ENCODE measurements at regions of chr2 and their contacts with region 1.

Region 1: DNA sequence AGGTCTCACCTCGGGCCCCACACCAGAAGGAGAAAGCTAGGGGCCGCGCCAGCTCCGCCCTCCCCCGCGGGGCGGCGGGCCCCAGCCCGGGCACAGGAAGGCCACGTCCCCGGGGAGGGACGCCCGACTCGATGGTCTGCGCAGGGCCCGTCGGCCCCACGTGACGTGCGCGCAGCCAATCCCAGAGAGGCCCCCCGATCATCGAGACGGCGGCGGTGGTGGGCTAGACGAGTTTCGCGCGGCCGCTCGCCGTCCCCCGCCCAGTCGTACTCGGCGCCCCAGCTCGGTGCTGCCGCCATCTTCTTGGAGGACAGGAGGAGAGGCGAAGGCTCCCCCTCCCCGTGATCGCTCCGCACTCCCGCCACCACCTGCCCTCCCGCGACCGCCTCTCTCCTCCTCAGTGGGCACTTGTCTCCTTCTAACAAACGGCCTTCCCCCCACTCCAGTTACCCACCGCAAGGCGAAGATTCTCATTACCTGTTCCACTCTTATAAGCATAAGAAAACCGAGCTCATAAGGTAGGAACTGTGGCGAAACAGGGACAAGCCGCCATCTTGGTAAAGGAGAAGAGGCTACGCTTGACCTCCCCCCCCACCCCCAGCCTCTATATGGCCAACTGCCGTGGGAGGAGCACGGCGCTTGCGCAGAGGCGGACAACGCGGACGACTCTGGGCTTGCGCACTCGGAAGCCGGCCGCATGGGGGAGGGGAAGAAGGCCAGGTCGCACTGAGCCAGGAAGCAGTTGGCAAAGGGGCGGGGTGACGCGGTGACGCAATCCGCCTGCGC is at the start of gene HDLBP:
- DNase-seq: peak; percentile 100
- H3K4me3 Mint-ChIP-seq: peak within 1 kb of the TSS; percentile 100
- H3K27ac Mint-ChIP-seq: peak within 1 kb of the TSS; percentile 100
- H3K4me1 Mint-ChIP-seq: peaks cover 53% of the 10 kb centered on the region
- H3K27me3 Mint-ChIP-seq: no peaks in the 10 kb centered on the region
- total RNA-seq, gene HDLBP: 266 and 270 TPM in 2 replicates

Region 2: DNA sequence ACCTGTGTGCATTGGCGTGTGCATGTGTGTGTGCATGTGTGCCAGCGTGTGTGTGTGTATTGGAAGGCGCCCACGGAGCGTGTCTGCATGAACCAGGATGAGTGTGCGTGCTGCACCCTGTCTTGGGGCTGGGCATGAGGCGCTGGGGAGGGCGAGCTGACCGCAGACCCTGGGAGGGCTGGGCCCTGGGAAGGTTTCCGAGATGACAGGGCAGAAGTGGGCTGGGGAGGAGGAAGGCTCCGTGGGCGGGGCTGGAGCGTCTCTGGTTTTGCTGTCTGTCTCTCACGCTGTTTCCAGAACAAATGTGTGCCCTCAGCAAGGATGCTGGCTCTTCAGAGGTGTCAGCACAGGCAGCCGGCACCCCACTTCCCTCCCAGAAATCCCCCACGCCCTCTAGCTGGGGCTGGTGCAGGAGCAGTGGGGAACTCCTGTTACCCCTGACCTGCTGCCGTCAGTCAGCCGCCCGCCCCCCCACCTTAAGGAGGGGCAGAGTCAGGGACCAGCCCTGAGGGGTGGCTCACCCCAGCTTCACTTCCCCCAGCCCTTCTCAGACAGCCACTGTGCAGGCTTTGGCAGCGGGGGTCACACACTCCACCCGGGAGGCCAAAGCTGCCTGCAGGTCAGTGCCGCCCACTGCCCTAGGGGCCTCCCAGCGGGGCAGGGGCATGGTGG is 690.2 kb before region 1 on chr2 and contains the start of gene GPR35:
- intact Hi-C with region 1: loop called (anchors 10 kb)
- DNase-seq: peak; percentile 91
- H3K4me3 Mint-ChIP-seq: peak within 1 kb of the TSS; percentile 82
- H3K27ac Mint-ChIP-seq: peak within 1 kb of the TSS; percentile 89
- H3K4me1 Mint-ChIP-seq: peaks cover 51% of the 10 kb centered on the region
- H3K27me3 Mint-ChIP-seq: no peaks in the 10 kb centered on the region
- total RNA-seq, gene GPR35: 7.1 and 8.7 TPM in 2 replicates

Region 3: GRCh38 chr2:241271641-241272297 is 43.5 kb before region 1 on chr2:
- intact Hi-C with region 1: loop called (anchors 1 kb)
- DNase-seq: peak; percentile 90
- H3K4me3 Mint-ChIP-seq: peak overlapping the region; percentile 92
- H3K27ac Mint-ChIP-seq: peak overlapping the region; percentile 90
- H3K4me1 Mint-ChIP-seq: peaks cover 42% of the 10 kb centered on the region
- H3K27me3 Mint-ChIP-seq: no peaks in the 10 kb centered on the region

Region 4: GRCh38 chr2:241355983-241356870 is 40.9 kb after region 1 on chr2 and contains the start of gene FARP2:
- intact Hi-C with region 1: loop called (anchors 1 kb)
- DNase-seq: peak; percentile 98
- H3K4me3 Mint-ChIP-seq: peak within 1 kb of the TSS; percentile 79
- H3K27ac Mint-ChIP-seq: peak within 1 kb of the TSS; percentile 76
- H3K4me1 Mint-ChIP-seq: peaks cover 33% of the 10 kb centered on the region
- H3K27me3 Mint-ChIP-seq: no peaks in the 10 kb centered on the region
- total RNA-seq, gene FARP2: 36.5 and 43.1 TPM in 2 replicates

Region 5: GRCh38 chr2:241617431-241618154 is 302.3 kb after region 1 on chr2:
- intact Hi-C with region 1: loop called (anchors 5 kb)
- DNase-seq: peak; percentile 85
- H3K4me3 Mint-ChIP-seq: peak overlapping the region; percentile 86
- H3K27ac Mint-ChIP-seq: peak overlapping the region; percentile 97
- H3K4me1 Mint-ChIP-seq: peaks cover 36% of the 10 kb centered on the region
- H3K27me3 Mint-ChIP-seq: no peaks in the 10 kb centered on the region

Region 6: DNA sequence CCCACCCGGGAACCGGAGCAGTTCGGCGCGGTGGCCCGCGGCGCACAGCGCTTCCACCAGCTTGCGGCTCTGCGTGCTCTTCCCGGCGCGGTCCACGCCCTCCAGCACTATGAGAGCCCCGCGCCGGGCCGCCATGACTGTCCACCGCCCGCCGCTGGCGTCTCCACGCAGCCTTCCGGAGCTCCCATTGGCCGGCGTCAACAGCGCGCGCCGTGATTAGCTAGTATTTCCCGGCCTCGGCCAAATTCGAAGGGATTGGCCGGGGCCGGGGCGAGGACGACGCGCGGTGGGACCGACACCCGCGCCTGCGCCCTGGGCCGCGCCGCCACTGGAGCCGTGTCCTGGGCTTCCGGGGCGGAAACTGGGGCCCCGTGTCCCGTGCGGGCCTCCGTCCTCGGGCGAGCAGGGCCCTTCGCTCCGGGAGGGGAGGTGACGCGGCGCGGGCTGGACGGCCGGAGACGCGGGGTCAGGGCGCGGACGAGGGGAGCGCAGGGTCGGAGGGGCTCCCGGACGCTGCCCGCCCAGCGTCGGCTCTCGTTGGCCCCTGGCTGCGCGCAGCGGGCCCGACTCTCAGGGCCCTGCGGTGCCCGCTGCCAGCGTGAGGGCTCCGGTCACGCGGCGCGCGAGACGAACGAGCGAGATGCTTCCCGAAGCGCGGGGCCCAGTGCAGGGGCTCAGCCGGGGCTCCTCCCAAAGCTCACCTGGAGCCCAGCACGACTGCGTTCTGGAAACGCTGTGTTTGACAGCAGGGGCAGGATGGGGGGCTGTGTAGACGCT is 371.6 kb after region 1 on chr2 and contains the start of gene DTYMK:
- intact Hi-C with region 1: loop called (anchors 1 kb)
- DNase-seq: peak; percentile 99
- H3K4me3 Mint-ChIP-seq: peak within 1 kb of the TSS; percentile 90
- H3K27ac Mint-ChIP-seq: peak within 1 kb of the TSS; percentile 98
- H3K4me1 Mint-ChIP-seq: peaks cover 21% of the 10 kb centered on the region
- H3K27me3 Mint-ChIP-seq: no peaks in the 10 kb centered on the region
- total RNA-seq, gene DTYMK: 110 and 111 TPM in 2 replicates

Region 7: GRCh38 chr2:241724259-241724974 is 409.1 kb after region 1 on chr2:
- intact Hi-C with region 1: no loop called
- DNase-seq: peak; percentile 59
- H3K4me3 Mint-ChIP-seq: no peak overlapping the region
- H3K27ac Mint-ChIP-seq: no peak overlapping the region
- H3K4me1 Mint-ChIP-seq: peaks cover 2% of the 10 kb centered on the region
- H3K27me3 Mint-ChIP-seq: no peaks in the 10 kb centered on the region

Region 8: DNA sequence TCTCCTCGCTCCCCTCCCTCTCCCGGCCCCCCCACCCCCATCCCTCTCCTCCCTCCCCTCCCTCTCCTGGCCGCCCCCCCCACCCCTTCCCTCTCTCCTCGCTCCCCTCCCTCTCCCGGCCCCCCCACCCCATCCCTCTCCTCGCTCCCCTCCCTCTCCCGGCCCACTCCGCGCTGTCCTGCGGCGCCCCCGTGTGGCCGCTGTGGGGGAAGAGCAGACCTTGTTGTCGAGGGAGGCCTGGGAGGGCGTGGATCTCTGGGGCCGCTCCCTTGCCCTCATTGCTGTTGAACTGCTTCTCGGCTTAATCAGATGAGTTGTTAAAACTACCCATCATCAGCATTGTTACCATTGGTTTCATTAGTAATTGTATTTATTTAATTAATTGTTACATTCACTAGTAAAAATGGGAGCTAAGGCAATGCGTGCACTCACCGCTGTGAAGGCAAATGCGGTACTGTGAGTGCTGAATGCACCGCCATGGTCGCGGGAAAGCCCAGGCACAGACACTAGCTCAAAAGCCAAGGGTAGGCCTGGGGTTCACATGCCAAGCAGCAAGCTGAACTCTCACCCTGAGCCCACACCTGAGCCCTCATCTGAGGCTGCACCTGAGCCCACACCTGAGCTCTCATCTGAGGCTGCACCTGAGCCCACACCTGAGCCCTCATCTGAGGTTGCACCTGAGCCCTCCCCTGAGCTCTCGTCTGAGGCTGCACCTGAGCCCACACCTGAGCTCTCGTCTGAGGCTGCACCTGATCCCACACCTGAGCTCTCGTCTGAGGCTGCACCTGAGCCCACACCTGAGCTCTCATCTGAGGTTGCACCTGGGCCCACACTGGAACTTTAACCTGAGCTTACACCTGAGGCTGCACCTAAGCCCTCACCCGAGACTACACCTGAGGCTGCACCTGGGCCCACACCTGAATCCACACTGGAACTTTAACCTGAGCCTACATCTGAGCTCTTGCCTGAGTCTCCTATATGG is 563.0 kb after region 1 on chr2:
- intact Hi-C with region 1: loop called (anchors 1 kb)
- DNase-seq: peak; percentile 94
- H3K4me3 Mint-ChIP-seq: no peak overlapping the region
- H3K27ac Mint-ChIP-seq: no peak overlapping the region
- H3K4me1 Mint-ChIP-seq: peaks cover 26% of the 10 kb centered on the region
- H3K27me3 Mint-ChIP-seq: peaks cover 4% of the 10 kb centered on the region